ENCODE measurements at regions of chr22 and their contacts with region 1.

Region 1: GRCh38 chr22:23539135-23539838 is 40.8 kb downstream of the IGLL1 start:
- DNase-seq: peak; percentile 86
- H3K4me3 ChIP-seq: no peak overlapping the region
- H3K27ac ChIP-seq: no peak overlapping the region
- H3K4me1 ChIP-seq: no peaks in the 10 kb centered on the region
- H3K27me3 ChIP-seq: peaks cover 0 to 5% of the 10 kb centered on the region in 2 experiments
- CTCF ChIP-seq: peak; percentile 75 to 81
- POLR2A ChIP-seq: no peak

Region 2: DNA sequence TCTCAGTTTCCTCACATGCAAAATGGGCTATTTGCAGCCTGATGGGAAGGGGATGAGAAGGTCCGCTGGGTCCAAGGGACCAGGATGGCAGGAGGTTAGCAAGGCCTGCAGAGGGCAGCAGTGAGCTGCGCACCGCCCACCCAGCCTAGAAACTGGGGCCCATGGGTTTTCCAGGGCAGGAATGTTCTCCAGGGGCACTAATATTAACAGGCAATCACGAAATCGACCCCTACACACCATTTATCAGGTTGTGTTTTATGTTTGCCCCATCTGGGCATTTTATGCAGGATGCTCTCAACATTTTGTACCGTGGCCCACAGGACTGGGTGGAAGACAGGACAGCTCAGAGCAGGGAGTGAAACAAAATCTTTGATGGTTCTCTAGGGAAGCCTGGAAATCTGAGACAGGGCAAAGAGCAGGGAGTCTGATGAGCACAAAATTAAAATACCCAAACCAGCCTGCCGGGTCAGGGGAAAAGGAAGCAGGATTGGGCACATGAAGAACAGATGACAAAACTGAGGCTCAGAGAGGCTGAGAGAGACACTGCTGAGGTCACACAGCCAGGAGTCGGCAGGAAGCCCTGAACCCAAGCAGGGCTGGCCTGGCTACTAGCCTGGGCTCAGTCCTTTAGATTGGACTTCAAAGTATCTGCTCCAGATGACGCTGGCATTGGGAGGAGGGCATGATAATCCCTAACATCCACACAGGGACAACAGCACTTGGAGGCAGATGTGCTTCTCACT is 360.6 kb before region 1 on chr22:
- CTCF ChIA-PET with region 1: no interaction called
- POLR2A ChIA-PET with region 1: no interaction called
- dilution Hi-C with region 1: no loop called
- intact Hi-C with region 1: loop called (anchors 10 kb)
- DNase-seq: peak; percentile 70
- H3K4me3 ChIP-seq: no peak overlapping the region
- H3K27ac ChIP-seq: peak overlapping the region; percentile 19
- H3K4me1 ChIP-seq: peaks cover 19% of the 10 kb centered on the region
- H3K27me3 ChIP-seq: no peaks in the 10 kb centered on the region
- CTCF ChIP-seq: peak; percentile 94 to 96
- POLR2A ChIP-seq: no peak

Region 3: DNA sequence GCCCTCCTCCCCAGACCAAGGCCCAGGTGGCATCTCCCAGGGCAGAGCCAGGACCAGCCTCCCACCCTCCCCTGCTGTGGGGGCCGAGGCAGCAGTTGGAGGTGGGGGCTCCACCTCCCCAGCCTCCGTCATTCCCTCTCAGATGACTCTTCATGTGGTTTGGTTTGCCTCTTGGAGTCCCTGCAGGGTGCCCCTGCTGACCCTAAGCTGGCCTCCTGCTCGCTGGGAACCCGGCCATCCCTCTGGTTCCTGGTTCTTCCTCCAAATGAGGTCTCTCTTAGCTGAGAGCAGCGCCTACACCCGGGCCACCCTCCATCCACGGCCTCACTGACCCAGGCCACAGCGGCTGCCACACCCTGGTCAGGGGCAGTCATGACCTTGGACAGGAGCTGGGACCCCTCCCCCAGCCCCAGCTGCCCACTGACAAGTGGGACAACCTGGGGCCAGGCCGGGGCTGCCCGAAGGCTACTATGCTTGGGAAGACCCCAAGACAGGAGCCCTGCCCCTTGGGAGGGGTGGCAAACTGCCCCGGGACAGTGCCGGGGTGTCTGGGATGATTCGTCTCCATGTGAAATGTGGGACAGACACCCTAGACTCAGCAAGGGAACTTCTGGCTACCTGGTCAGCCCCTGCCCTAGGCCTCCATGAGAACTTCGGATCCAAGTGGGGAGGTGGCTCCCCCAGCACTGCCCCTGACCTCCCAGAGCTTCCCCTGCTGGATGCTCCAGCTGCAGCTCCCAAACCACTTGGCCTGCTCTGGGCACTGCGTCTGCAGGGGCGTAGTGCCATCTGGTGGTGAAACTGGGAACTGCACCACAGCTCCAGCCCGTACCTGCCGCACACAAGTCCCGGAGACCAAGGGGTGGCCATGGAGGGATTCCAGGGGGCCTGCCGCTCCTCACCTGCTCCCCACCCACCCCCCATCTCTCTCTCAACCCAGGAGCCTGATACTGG is 153.7 kb before region 1 on chr22:
- CTCF ChIA-PET with region 1: interaction called, 4 read pairs
- POLR2A ChIA-PET with region 1: no interaction called
- dilution Hi-C with region 1: no loop called
- intact Hi-C with region 1: loop called (anchors 5 kb)
- DNase-seq: peak; percentile 84
- H3K4me3 ChIP-seq: no peak overlapping the region
- H3K27ac ChIP-seq: no peak overlapping the region
- H3K4me1 ChIP-seq: no peaks in the 10 kb centered on the region
- H3K27me3 ChIP-seq: no peaks in the 10 kb centered on the region
- CTCF ChIP-seq: peak; percentile 90 to 98
- POLR2A ChIP-seq: no peak

Region 4: GRCh38 chr22:23431337-23432072 is 107.8 kb before region 1 on chr22:
- CTCF ChIA-PET with region 1: interaction called, 3 read pairs
- POLR2A ChIA-PET with region 1: no interaction called
- dilution Hi-C with region 1: no loop called
- intact Hi-C with region 1: loop called (anchors 10 kb)
- DNase-seq: no peak
- H3K4me3 ChIP-seq: no peak overlapping the region
- H3K27ac ChIP-seq: no peak overlapping the region
- H3K4me1 ChIP-seq: no peaks in the 10 kb centered on the region
- H3K27me3 ChIP-seq: no peaks in the 10 kb centered on the region
- CTCF ChIP-seq: no peak
- POLR2A ChIP-seq: no peak

Region 5: GRCh38 chr22:23473901-23474300 is 65.4 kb before region 1 on chr22:
- CTCF ChIA-PET with region 1: no interaction called
- POLR2A ChIA-PET with region 1: no interaction called
- dilution Hi-C with region 1: no loop called
- intact Hi-C with region 1: no loop called
- DNase-seq: no peak
- H3K4me3 ChIP-seq: no peak overlapping the region
- H3K27ac ChIP-seq: no peak overlapping the region
- H3K4me1 ChIP-seq: no peaks in the 10 kb centered on the region
- H3K27me3 ChIP-seq: peaks cover 0 to 6% of the 10 kb centered on the region in 2 experiments
- CTCF ChIP-seq: no peak
- POLR2A ChIP-seq: no peak

Region 6: DNA sequence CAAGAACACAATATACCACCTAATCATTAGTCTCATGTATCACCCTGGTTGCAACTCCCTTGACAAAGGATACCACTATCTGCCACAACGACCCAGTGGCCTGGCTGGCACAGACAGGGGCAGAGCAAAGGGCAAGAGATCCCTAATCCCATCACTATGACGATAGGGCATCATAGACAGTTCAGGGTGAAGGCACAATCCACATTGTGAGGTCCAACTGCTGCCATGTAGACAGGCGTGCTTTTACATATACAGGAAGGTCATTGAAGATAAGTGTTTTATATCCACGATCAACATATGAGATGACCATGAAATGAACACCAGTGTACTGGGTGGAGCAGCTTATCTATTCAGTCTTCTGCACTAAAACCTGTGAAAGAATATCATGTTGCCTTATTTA is 53.8 kb before region 1 on chr22:
- CTCF ChIA-PET with region 1: no interaction called
- POLR2A ChIA-PET with region 1: no interaction called
- dilution Hi-C with region 1: no loop called
- intact Hi-C with region 1: no loop called
- DNase-seq: no peak
- H3K4me3 ChIP-seq: no peak overlapping the region
- H3K27ac ChIP-seq: no peak overlapping the region
- H3K4me1 ChIP-seq: no peaks in the 10 kb centered on the region
- H3K27me3 ChIP-seq: peaks cover 4 to 8% of the 10 kb centered on the region in 2 experiments
- CTCF ChIP-seq: no peak
- POLR2A ChIP-seq: no peak

Region 7: DNA sequence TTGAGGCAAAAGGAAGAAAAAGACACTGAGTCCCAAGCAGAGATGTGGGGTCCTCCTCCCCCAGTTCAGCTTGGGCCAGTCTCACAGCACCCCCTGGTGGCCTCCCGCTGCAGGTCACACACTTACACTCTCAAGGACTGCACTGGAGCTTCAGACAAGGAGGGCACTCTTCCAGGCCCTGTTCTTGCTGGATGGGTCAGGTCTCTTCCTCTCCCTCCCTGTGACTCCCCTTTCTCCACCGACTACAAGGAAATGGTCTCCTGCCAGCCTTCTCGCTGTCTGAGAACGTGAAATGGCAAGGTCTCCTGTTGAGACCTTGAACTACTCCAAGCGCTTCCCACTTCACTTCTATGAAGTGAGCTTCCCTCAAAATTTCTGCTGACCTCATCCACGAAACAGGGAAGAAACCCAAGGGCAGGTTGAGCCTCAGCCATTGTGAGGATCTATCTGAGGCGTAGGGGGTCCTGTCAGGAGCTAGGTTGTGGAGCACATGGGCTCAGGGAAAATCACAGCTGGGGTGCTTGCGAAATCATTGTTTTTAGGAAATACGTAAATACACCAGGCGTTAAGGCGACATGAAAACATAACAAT is 52.0 kb after region 1 on chr22:
- CTCF ChIA-PET with region 1: interaction called, 29 read pairs
- POLR2A ChIA-PET with region 1: no interaction called
- dilution Hi-C with region 1: no loop called
- intact Hi-C with region 1: loop called (anchors 1 kb)
- DNase-seq: peak; percentile 59
- H3K4me3 ChIP-seq: no peak overlapping the region
- H3K27ac ChIP-seq: no peak overlapping the region
- H3K4me1 ChIP-seq: no peaks in the 10 kb centered on the region
- H3K27me3 ChIP-seq: no peaks in the 10 kb centered on the region
- CTCF ChIP-seq: peak; percentile 88 to 92
- POLR2A ChIP-seq: no peak

Region 8: GRCh38 chr22:23849009-23850006 is 310.0 kb after region 1 on chr22:
- CTCF ChIA-PET with region 1: interaction called, 11 read pairs
- POLR2A ChIA-PET with region 1: no interaction called
- dilution Hi-C with region 1: no loop called
- intact Hi-C with region 1: loop called (anchors 5 kb)
- DNase-seq: peak; percentile 74
- H3K4me3 ChIP-seq: no peak overlapping the region
- H3K27ac ChIP-seq: no peak overlapping the region
- H3K4me1 ChIP-seq: peaks cover 4% of the 10 kb centered on the region
- H3K27me3 ChIP-seq: no peaks in the 10 kb centered on the region
- CTCF ChIP-seq: peak; percentile 98 to 99
- POLR2A ChIP-seq: no peak